Esophagus squamous epithelium (tissue), 5 donors: ENCODE measurements at regions of chr4 and their contacts with region 1.

Region 1: GRCh38 chr4:46329118-46329976 is 60.6 kb downstream of the GABRA2 start:
- DNase-seq: no peak
- H3K4me3 ChIP-seq: no peak overlapping the region
- H3K27ac ChIP-seq: no peak overlapping the region
- H3K4me1 ChIP-seq: no peaks in the 10 kb centered on the region
- H3K27me3 ChIP-seq: no peaks in the 10 kb centered on the region
- CTCF ChIP-seq: no peak
- POLR2A ChIP-seq: no peak

Region 2: GRCh38 chr4:45467157-45467556 is 862.2 kb before region 1 on chr4:
- intact Hi-C with region 1: loop called (anchors 10 kb)
- DNase-seq: no peak
- H3K4me3 ChIP-seq: no peak overlapping the region
- H3K27ac ChIP-seq: no peak overlapping the region
- H3K4me1 ChIP-seq: no peaks in the 10 kb centered on the region
- H3K27me3 ChIP-seq: no peaks in the 10 kb centered on the region
- CTCF ChIP-seq: no peak
- POLR2A ChIP-seq: no peak

Region 3: GRCh38 chr4:45701621-45702020 is 627.7 kb before region 1 on chr4:
- intact Hi-C with region 1: no loop called
- DNase-seq: no peak
- H3K4me3 ChIP-seq: no peak overlapping the region
- H3K27ac ChIP-seq: no peak overlapping the region
- H3K4me1 ChIP-seq: no peaks in the 10 kb centered on the region
- H3K27me3 ChIP-seq: no peaks in the 10 kb centered on the region
- CTCF ChIP-seq: no peak
- POLR2A ChIP-seq: no peak